Activated T-helper 2 cell treated with anti-CD3 and anti-CD28 coated beads, Interferon-gamma antibody, Interleukin-2, Interleukin-4, amounts not matched to agents 10 μg/mL and 5 μg/mL and 100 μg/mL, durations not matched to agents 14 hours and 24 hours and 36 hours (primary cell): ENCODE measurements at regions of chr6 and their contacts with region 1.

Region 1: DNA sequence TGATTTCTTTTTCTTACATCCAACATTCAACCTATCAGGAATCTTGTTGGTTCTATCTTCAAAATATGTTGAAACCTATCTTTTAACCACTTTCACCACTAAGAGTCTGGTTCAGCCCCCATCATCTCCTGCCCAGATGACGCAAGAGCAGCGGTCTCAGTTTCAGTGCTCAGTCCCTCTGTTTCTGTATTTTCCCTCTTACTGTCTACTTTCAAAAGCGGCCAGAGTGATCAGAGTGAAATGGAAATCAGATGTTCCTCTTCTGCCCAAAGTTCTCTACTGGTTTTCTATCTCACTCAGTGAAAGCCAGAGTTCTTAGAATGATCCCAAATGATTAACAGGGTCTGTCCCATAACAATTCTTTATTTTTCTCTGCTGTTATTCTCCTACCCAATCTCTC is 147.9 kb upstream of the PDE7B start:
- DNase-seq: peak; percentile 15
- H3K4me3 Mint-ChIP-seq: peak overlapping the region; percentile 35
- H3K27ac Mint-ChIP-seq: peak overlapping the region; percentile 90
- H3K4me1 Mint-ChIP-seq: peaks cover 41% of the 10 kb centered on the region
- H3K27me3 Mint-ChIP-seq: peaks cover 5% of the 10 kb centered on the region

Region 2: DNA sequence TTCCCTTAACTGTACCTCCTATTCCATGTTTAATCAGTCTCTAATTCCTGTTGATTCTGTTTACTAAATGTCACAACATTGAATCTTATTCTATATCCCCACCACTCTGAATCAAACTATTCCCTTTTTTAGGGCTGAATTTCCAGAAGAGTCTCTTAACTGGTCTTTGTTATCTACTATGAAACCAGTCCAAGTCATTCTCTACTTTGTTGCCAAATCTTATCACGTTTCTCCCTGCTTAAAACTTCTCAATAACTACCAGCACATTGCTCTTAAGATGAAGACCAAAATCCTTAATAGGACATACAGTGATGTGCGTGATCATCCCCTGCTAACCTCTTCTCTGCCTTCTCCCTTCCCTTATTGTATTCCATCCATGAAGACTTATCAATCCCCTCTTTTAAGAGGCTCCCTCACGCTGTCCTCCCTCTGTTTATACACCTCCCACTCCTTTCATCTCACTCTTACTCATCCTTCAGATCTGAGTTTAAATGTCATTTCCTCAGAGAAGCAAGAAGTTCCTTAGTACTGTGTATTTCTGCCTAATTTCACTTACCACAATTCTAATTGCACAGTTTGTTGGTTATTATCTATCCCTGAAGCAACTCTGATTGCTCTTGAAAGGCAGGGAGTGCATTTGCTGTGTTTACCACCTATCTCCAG is 63.0 kb before region 1 on chr6:
- intact Hi-C with region 1: loop called (anchors 2 kb)
- DNase-seq: no peak
- H3K4me3 Mint-ChIP-seq: peak overlapping the region; percentile 64
- H3K27ac Mint-ChIP-seq: peak overlapping the region; percentile 94
- H3K4me1 Mint-ChIP-seq: peaks cover 63% of the 10 kb centered on the region
- H3K27me3 Mint-ChIP-seq: no peaks in the 10 kb centered on the region

Region 3: DNA sequence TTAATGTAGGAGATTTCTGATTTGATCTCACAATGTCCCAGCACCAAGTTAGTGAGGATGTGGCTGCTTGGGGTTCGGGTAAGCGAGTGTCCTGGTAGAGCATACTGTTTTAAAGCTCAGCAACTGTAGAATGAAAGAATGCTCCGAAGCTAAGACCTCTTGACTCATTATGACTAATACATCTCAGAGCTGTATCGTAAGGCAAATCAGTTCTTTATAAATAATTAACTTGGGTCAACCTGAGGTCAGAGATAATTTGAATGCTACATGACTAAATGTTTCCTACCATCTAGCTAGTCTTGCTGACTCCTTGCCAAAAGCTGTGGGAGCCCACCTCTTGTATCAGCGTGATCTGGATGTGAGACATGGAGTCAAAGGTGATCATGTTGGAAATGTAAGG is 19.1 kb after region 1 on chr6:
- intact Hi-C with region 1: loop called (anchors 1 kb)
- DNase-seq: no peak
- H3K4me3 Mint-ChIP-seq: no peak overlapping the region
- H3K27ac Mint-ChIP-seq: peak overlapping the region; percentile 16
- H3K4me1 Mint-ChIP-seq: peaks cover 11% of the 10 kb centered on the region
- H3K27me3 Mint-ChIP-seq: no peaks in the 10 kb centered on the region

Region 4: GRCh38 chr6:135782546-135782945 is 78.9 kb after region 1 on chr6:
- intact Hi-C with region 1: loop called (anchors 10 kb)
- DNase-seq: no peak
- H3K4me3 Mint-ChIP-seq: no peak overlapping the region
- H3K27ac Mint-ChIP-seq: peak overlapping the region; percentile 43
- H3K4me1 Mint-ChIP-seq: peaks cover 19% of the 10 kb centered on the region
- H3K27me3 Mint-ChIP-seq: no peaks in the 10 kb centered on the region